Activated T-helper 1 cell treated with anti-CD3 and anti-CD28 coated beads, Interleukin-12 subunit alpha, Interleukin-12 subunit beta, Interleukin-2, Interleukin-4 antibody, amounts not matched to agents 30 ng/mL and 10 ng/mL and 1 ng/mL, durations not matched to agents 14 hours and 24 hours and 36 hours (primary cell): ENCODE measurements at regions of chr4 and their contacts with region 1.

Region 1: GRCh38 chr4:77800483-77801259 is 18.5 kb downstream of the CNOT6L start:
- DNase-seq: no peak
- H3K4me3 Mint-ChIP-seq: peak overlapping the region; percentile 48
- H3K27ac Mint-ChIP-seq: peak overlapping the region; percentile 69
- H3K4me1 Mint-ChIP-seq: peaks cover 38% of the 10 kb centered on the region
- H3K27me3 Mint-ChIP-seq: no peaks in the 10 kb centered on the region

Region 2: DNA sequence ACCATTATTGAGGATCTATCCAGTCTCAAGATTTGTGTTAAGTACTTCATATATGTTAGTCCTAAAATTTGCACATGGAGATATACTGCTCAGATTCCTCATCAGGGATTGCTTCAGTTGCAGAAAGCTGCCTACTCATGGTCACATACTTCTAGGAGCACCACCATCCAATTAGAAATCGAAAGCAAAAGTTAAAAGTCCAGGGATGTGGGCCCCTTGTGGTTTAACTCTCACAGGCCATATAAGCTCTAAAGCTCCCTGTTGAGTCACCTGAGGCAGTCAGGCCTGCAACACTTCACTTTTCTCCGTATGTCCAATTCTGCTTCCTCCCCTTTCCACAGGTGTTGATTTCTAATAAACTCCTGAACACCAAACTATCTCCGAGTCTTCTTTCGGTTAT is 65.7 kb before region 1 on chr4:
- intact Hi-C with region 1: loop called (anchors 5 kb)
- DNase-seq: peak; percentile 50
- H3K4me3 Mint-ChIP-seq: peak overlapping the region; percentile 67
- H3K27ac Mint-ChIP-seq: peak overlapping the region; percentile 49
- H3K4me1 Mint-ChIP-seq: peaks cover 79% of the 10 kb centered on the region
- H3K27me3 Mint-ChIP-seq: no peaks in the 10 kb centered on the region